ENCODE measurements at regions of chr4 and their contacts with region 1.

Region 1: DNA sequence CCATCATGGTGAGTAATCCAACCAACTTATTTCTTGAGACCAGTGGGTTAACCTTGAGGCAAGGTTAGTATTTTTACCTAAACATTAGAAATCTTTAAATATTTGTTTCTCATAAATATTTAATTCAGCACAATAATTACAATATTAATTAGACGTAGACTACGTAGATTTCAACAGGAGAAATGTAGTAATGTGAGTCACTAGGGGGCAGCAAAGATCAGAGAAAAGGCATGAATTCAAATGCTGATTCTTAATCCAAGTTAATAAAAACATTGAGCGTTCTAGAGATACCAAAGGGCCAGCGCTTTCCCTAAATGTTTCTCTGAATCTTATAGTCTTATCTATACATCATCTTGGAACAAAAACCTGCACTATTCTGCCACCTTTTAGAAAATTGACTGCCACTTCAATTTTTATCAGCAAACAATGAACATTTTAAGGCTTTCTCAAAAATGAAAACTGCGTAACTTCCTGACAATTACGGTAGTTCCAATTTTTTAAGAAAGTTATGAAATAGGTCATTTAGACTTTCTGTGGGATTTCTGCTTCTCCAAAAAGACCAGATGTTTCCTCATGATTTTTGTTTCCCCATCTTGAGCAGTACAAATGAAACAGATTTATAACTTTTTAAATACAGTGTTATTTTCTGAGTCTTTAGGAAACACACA is 180.7 kb downstream of the GASK1B start:
- DNase-seq: no peak
- H3K4me3 ChIP-seq: peak overlapping the region; percentile 34 to 39
- H3K27ac ChIP-seq: peak overlapping the region; percentile 52 to 56
- H3K4me1 ChIP-seq: no peaks in the 10 kb centered on the region
- H3K27me3 ChIP-seq: no peaks in the 10 kb centered on the region
- CTCF ChIP-seq: peak; percentile 62 to 86

Region 2: DNA sequence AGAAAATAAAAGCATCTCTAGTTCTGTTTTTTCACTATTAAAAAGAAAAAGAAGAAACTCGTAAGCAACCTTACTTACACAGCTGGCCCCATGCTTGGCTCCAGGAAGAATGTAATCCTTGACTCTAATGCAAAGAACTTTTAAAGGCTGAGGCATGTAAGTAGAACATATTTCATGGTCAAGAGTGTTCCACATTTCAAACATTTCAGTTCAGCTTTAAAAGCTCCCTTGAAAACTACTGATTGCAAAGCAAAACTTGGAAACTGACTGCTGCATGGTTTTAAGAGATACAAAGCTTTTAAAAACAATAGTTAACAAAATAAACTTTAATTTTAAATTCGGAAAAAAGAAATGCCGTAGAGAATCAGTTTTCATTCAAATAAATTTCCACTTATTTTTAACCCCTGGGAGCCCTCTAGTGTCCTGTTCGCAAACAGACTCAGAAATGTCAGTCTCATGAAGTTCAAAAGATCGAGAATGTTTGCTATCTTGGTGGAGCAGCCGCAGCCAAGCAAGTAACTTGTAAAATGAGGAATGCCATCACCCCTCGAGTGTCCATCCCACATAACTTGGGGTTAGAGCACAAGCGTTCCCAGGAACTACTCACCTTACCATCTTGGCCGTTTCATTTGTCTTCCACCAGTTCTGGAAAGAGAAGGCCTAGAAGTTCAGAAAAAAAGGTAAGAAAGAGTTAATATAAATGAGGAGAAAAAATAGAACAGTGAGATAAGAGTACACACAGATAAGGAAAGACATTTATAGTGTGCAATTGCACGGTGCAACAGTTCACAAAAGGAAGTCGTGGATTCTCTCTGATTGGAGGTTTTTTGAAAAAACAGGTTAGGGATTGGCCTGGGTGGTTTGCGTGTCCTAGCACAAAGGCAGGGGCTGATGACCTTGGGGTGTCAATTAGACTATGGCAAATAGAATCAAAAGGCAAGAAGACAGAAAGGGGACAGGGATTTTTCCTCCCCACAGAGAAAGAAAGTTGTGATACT is 180.4 kb after region 1 on chr4 and contains the start of gene GASK1B:
- intact Hi-C with region 1: loop called (anchors 5 kb)
- DNase-seq: peak in 1 of 2 donors; percentile 50
- H3K4me3 ChIP-seq: peak within 1 kb of the TSS; percentile 54 to 57
- H3K27ac ChIP-seq: peak within 1 kb of the TSS; percentile 87 to 89
- H3K4me1 ChIP-seq: peaks cover 0 to 71% (median 19%) of the 10 kb centered on the region in 4 donors
- H3K27me3 ChIP-seq: no peaks in the 10 kb centered on the region
- CTCF ChIP-seq: peak; percentile 54 to 61

Region 3: GRCh38 chr4:158253350-158253980 is 261.3 kb after region 1 on chr4:
- intact Hi-C with region 1: loop called (anchors 5 kb)
- DNase-seq: peak in 1 of 2 donors; percentile 42
- H3K4me3 ChIP-seq: no peak overlapping the region
- H3K27ac ChIP-seq: peak overlapping the region in 1 of 2 donors; percentile 53
- H3K4me1 ChIP-seq: peaks cover 0 to 26% (median 2%) of the 10 kb centered on the region in 4 donors
- H3K27me3 ChIP-seq: no peaks in the 10 kb centered on the region
- CTCF ChIP-seq: peak; percentile 64 to 69

Region 4: DNA sequence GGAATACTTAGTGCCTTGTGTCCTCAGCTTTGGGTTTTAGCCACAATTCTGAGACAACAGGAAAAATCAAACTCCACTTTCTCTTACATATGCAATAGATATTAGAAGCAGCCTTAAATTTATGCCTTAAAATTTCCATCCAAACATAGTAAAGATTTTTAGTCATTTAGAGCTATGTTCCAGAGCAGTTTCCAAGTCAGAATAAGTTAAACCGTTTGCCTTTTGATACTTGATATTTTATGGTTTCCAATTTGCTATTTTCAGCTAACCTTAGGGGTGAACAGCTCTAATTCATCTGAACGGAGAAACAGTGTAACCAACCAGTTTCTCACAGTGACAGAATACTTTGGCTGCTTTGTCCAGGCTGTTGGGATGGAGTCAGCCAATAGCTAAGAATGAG is 403.7 kb after region 1 on chr4:
- intact Hi-C with region 1: no loop called
- DNase-seq: no peak
- H3K4me3 ChIP-seq: no peak overlapping the region
- H3K27ac ChIP-seq: no peak overlapping the region
- H3K4me1 ChIP-seq: no peaks in the 10 kb centered on the region
- H3K27me3 ChIP-seq: no peaks in the 10 kb centered on the region
- CTCF ChIP-seq: no peak